ENCODE measurements at regions of chr16 and their contacts with region 1.

Region 1: GRCh38 chr16:31073968-31074813 is at the starts of genes ZNF646 and ZNF668:
- DNase-seq: peak; percentile 86
- ATAC-seq: peak; percentile 83
- H3K4me3 Mint-ChIP-seq: peak within 1 kb of the TSS; percentile 96
- H3K27ac Mint-ChIP-seq: peak within 1 kb of the TSS; percentile 91
- H3K4me1 Mint-ChIP-seq: peaks cover 34% of the 10 kb centered on the region
- H3K27me3 Mint-ChIP-seq: no peaks in the 10 kb centered on the region
- CTCF ChIP-seq: no peak
- total RNA-seq, gene ZNF646: 32.4 and 32.5 TPM in 2 replicates
- total RNA-seq, gene ZNF668: 8.3 and 10.1 TPM in 2 replicates

Region 2: DNA sequence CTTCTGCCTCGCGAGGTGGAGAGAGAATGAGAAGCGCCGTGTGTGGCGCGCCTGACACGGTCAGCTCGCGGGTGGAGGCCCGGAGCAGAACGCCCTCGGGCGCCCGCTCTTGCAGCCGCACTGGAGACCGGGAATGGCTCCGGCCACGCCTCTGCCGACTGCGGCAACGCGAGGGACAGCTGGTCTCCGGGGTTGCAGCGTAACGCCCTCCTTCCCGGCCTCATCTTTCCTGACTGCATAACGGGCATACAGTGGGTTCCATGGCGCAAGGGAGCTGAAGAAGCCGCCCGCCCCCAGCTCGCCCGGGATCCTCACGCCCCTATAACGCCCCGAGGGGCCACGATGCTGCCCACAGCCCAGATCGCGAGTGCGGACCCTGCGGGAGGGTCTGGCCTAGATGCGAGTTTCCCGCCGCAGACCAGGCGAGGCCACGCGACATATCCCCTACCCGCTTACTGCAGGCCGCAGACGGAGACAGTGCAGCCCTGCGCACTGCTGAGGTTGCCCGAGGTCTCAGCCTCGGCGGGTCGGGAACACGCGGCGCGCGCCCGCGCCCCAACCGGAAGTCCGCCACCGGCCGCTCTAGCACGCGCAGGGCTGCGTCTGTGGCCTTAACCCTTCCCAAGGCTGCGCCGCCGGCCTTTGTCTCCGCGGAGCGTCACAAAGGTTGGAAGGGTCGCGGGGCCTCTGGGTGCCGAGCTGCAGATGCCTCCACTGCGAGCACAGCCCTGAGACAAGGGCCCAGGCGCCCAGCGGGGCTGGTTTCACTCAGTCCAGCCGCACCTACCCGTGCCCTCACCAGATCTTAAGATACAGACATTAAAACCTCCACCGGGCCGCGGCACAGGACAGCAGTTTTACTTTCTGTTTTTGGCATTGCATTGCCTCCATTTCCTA is 199.1 kb before region 1 on chr16:
- CTCF ChIA-PET with region 1: no interaction called
- POLR2A ChIA-PET with region 1: interaction called, 11 read pairs
- intact Hi-C with region 1: no loop called
- DNase-seq: peak; percentile 90
- ATAC-seq: peak; percentile 83
- H3K4me3 Mint-ChIP-seq: peak overlapping the region; percentile 94
- H3K27ac Mint-ChIP-seq: peak overlapping the region; percentile 95
- H3K4me1 Mint-ChIP-seq: peaks cover 37% of the 10 kb centered on the region
- H3K27me3 Mint-ChIP-seq: no peaks in the 10 kb centered on the region
- CTCF ChIP-seq: no peak

Region 3: GRCh38 chr16:30957456-30958174 is 116.6 kb before region 1 on chr16 and contains the start of gene SETD1A:
- CTCF ChIA-PET with region 1: no interaction called
- POLR2A ChIA-PET with region 1: interaction called, 12 read pairs
- intact Hi-C with region 1: loop called (anchors 1 kb)
- DNase-seq: peak; percentile 89
- ATAC-seq: peak; percentile 87
- H3K4me3 Mint-ChIP-seq: peak within 1 kb of the TSS; percentile 95
- H3K27ac Mint-ChIP-seq: peak within 1 kb of the TSS; percentile 99
- H3K4me1 Mint-ChIP-seq: peaks cover 31% of the 10 kb centered on the region
- H3K27me3 Mint-ChIP-seq: no peaks in the 10 kb centered on the region
- CTCF ChIP-seq: no peak
- total RNA-seq, gene SETD1A: 29.6 and 32.8 TPM in 2 replicates

Region 4: GRCh38 chr16:31032736-31033708 is 41.2 kb before region 1 on chr16 and contains the start of gene STX4:
- CTCF ChIA-PET with region 1: no interaction called
- POLR2A ChIA-PET with region 1: interaction called, 32 read pairs
- intact Hi-C with region 1: loop called (anchors 1 kb)
- DNase-seq: peak; percentile 95
- ATAC-seq: peak; percentile 78
- H3K4me3 Mint-ChIP-seq: peak within 1 kb of the TSS; percentile 97
- H3K27ac Mint-ChIP-seq: peak within 1 kb of the TSS; percentile 94
- H3K4me1 Mint-ChIP-seq: peaks cover 17% of the 10 kb centered on the region
- H3K27me3 Mint-ChIP-seq: no peaks in the 10 kb centered on the region
- CTCF ChIP-seq: no peak
- total RNA-seq, gene STX4: 106 and 107 TPM in 2 replicates

Region 5: GRCh38 chr16:31055613-31056012 is 18.6 kb before region 1 on chr16:
- CTCF ChIA-PET with region 1: no interaction called
- POLR2A ChIA-PET with region 1: no interaction called
- intact Hi-C with region 1: no loop called
- DNase-seq: no peak
- ATAC-seq: no peak
- H3K4me3 Mint-ChIP-seq: no peak overlapping the region
- H3K27ac Mint-ChIP-seq: no peak overlapping the region
- H3K4me1 Mint-ChIP-seq: no peaks in the 10 kb centered on the region
- H3K27me3 Mint-ChIP-seq: no peaks in the 10 kb centered on the region
- CTCF ChIP-seq: no peak

Region 6: GRCh38 chr16:31117391-31118197 is 43.4 kb after region 1 on chr16 and contains the start of gene KAT8:
- CTCF ChIA-PET with region 1: no interaction called
- POLR2A ChIA-PET with region 1: interaction called, 59 read pairs
- intact Hi-C with region 1: loop called (anchors 1 kb)
- DNase-seq: peak; percentile 92
- ATAC-seq: peak; percentile 94
- H3K4me3 Mint-ChIP-seq: peak within 1 kb of the TSS; percentile 85
- H3K27ac Mint-ChIP-seq: peak within 1 kb of the TSS; percentile 85
- H3K4me1 Mint-ChIP-seq: peaks cover 22% of the 10 kb centered on the region
- H3K27me3 Mint-ChIP-seq: no peaks in the 10 kb centered on the region
- CTCF ChIP-seq: no peak
- total RNA-seq, gene KAT8: 82.1 and 93.7 TPM in 2 replicates

Region 7: DNA sequence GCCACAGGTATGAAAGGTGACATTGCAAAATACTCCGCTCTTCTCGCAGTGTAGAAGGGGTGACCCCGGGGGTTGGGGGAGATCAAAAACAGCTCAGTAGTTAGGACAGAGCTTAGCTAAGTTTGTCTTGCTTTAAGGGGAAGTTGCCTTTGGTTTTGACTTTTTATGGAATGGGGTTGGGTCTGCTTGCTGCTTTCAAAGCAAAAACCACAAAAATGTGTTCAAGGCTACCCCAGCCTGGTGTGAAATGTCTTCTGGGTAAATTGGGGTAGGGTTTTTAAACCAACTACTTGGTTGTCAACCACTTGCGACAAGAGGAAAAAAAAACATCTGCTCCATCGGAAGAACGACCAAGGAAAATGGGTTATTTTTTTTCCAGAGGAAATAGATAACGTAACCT is 112.0 kb after region 1 on chr16:
- CTCF ChIA-PET with region 1: no interaction called
- POLR2A ChIA-PET with region 1: no interaction called
- intact Hi-C with region 1: no loop called
- DNase-seq: no peak
- ATAC-seq: no peak
- H3K4me3 Mint-ChIP-seq: no peak overlapping the region
- H3K27ac Mint-ChIP-seq: no peak overlapping the region
- H3K4me1 Mint-ChIP-seq: peaks cover 52% of the 10 kb centered on the region
- H3K27me3 Mint-ChIP-seq: no peaks in the 10 kb centered on the region
- CTCF ChIP-seq: no peak

Region 8: DNA sequence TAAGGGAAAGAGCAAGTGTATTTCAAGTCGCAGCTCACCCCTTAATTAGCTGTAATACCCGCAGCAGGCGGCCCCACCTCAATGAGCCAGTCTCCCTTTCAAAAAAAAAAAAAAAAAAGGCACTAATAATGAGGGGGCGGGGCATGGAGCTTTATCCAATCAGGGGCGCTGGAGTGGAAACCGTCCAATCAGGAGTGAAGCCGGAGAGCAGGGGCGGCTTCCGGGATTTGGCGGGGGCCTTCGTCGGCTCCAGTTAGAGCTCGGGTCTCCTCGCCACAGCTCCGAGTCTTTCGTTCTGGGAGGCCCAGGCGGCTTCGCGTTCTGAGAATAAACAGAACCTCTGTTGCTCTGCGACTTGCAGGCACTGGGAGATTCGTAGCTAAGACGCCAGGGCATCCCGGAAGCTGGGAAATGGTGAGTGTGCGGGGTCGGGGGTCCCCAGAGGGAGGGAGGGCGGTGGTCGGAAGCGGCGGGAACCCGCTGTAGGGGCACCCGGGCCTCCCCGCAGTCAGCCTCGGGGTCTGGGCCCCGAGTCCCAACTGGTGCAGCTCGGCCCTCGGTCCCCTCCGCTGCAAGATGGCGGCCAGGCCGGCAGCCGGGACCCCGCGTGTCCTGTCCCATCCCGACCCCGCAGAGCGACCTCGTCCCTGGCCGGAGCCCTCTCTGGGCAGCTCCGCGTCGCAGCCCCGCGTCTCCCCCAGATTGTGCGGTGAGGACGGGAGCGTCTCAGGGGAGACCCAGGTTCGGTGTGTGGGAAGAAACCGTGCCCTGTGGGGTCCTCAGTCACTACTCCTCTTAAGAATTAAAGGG is 799.6 kb after region 1 on chr16 and contains the start of gene ZNF267:
- CTCF ChIA-PET with region 1: no interaction called
- POLR2A ChIA-PET with region 1: interaction called, 13 read pairs
- intact Hi-C with region 1: no loop called
- DNase-seq: peak; percentile 79
- ATAC-seq: peak; percentile 69
- H3K4me3 Mint-ChIP-seq: peak within 1 kb of the TSS; percentile 83
- H3K27ac Mint-ChIP-seq: peak within 1 kb of the TSS; percentile 87
- H3K4me1 Mint-ChIP-seq: peaks cover 83% of the 10 kb centered on the region
- H3K27me3 Mint-ChIP-seq: no peaks in the 10 kb centered on the region
- CTCF ChIP-seq: no peak
- total RNA-seq, gene ZNF267: 93.5 and 99.0 TPM in 2 replicates

Measured in activated B cell treated with CpG ODN at 0.5 μM for 24 hours (primary cell).